Left ventricle myocardium inferior (tissue), 1 donor: ENCODE measurements at regions of chr1 and their contacts with region 1.

Region 1: DNA sequence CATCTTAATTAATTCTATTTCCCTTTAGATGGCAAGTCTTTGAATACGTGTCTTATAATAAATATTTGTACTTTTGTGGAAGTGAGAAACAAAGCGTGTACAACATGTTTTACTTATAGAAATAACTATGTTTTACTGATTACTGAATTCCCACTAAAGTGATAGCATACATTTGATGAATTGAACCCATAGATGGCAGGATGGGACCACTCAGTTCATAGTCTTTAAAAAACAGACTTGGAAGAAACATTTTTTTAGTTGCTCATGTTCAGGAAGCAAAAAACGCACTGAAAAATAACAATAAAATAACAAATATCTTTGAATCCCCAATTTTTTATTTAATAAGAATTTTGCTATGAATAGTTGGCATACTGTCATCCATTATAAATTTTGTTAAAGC is 507.1 kb upstream of the ZRANB2 start:
- DNase-seq: no peak
- H3K4me3 ChIP-seq: no peak overlapping the region
- H3K27ac ChIP-seq: no peak overlapping the region
- H3K4me1 ChIP-seq: no peaks in the 10 kb centered on the region
- H3K27me3 ChIP-seq: no peaks in the 10 kb centered on the region
- CTCF ChIP-seq: peak; percentile 66

Region 2: GRCh38 chr1:71210718-71211117 is 377.2 kb before region 1 on chr1:
- intact Hi-C with region 1: no loop called
- DNase-seq: no peak
- H3K4me3 ChIP-seq: no peak overlapping the region
- H3K27ac ChIP-seq: no peak overlapping the region
- H3K4me1 ChIP-seq: no peaks in the 10 kb centered on the region
- H3K27me3 ChIP-seq: no peaks in the 10 kb centered on the region
- CTCF ChIP-seq: no peak

Region 3: GRCh38 chr1:71390518-71390917 is 197.4 kb before region 1 on chr1:
- intact Hi-C with region 1: no loop called
- DNase-seq: no peak
- H3K4me3 ChIP-seq: no peak overlapping the region
- H3K27ac ChIP-seq: no peak overlapping the region
- H3K4me1 ChIP-seq: no peaks in the 10 kb centered on the region
- H3K27me3 ChIP-seq: no peaks in the 10 kb centered on the region
- CTCF ChIP-seq: no peak

Region 4: GRCh38 chr1:72037745-72038343 is 449.9 kb after region 1 on chr1:
- intact Hi-C with region 1: loop called (anchors 10 kb)
- DNase-seq: no peak
- H3K4me3 ChIP-seq: no peak overlapping the region
- H3K27ac ChIP-seq: no peak overlapping the region
- H3K4me1 ChIP-seq: no peaks in the 10 kb centered on the region
- H3K27me3 ChIP-seq: no peaks in the 10 kb centered on the region
- CTCF ChIP-seq: peak; percentile 66